Activated CD8-positive, alpha-beta T cell treated with anti-CD3 and anti-CD28 coated beads, Interleukin-2, amount 10 ng/mL, durations not matched to agents 7 days and 5 days (primary cell): ENCODE measurements at regions of chr2 and their contacts with region 1.

Region 1: GRCh38 chr2:174748948-174749347 is 15.3 kb downstream of the CHRNA1 start:
- DNase-seq: peak; percentile 82
- ATAC-seq: peak; percentile 62
- H3K4me3 Mint-ChIP-seq: no peak overlapping the region
- H3K27ac Mint-ChIP-seq: no peak overlapping the region
- H3K4me1 Mint-ChIP-seq: peaks cover 37% of the 10 kb centered on the region
- H3K27me3 Mint-ChIP-seq: peaks cover 13% of the 10 kb centered on the region

Region 2: GRCh38 chr2:174412256-174412655 is 336.7 kb before region 1 on chr2:
- CTCF ChIA-PET with region 1: no interaction called
- POLR2A ChIA-PET with region 1: no interaction called
- DNase-seq: no peak
- ATAC-seq: no peak
- H3K4me3 Mint-ChIP-seq: no peak overlapping the region
- H3K27ac Mint-ChIP-seq: no peak overlapping the region
- H3K4me1 Mint-ChIP-seq: peaks cover 3% of the 10 kb centered on the region
- H3K27me3 Mint-ChIP-seq: no peaks in the 10 kb centered on the region

Region 3: GRCh38 chr2:174688079-174688478 is 60.9 kb before region 1 on chr2:
- CTCF ChIA-PET with region 1: interaction called, 13 read pairs
- POLR2A ChIA-PET with region 1: no interaction called
- DNase-seq: no peak
- ATAC-seq: peak; percentile 68
- H3K4me3 Mint-ChIP-seq: no peak overlapping the region
- H3K27ac Mint-ChIP-seq: no peak overlapping the region
- H3K4me1 Mint-ChIP-seq: peaks cover 44% of the 10 kb centered on the region
- H3K27me3 Mint-ChIP-seq: no peaks in the 10 kb centered on the region

Region 4: GRCh38 chr2:174729797-174730697 is 18.9 kb before region 1 on chr2:
- CTCF ChIA-PET with region 1: interaction called, 20 read pairs
- POLR2A ChIA-PET with region 1: no interaction called
- DNase-seq: peak; percentile 47
- ATAC-seq: peak; percentile 81
- H3K4me3 Mint-ChIP-seq: peak overlapping the region; percentile 80
- H3K27ac Mint-ChIP-seq: peak overlapping the region; percentile 11
- H3K4me1 Mint-ChIP-seq: peaks cover 33% of the 10 kb centered on the region
- H3K27me3 Mint-ChIP-seq: peaks cover 32% of the 10 kb centered on the region

Region 5: DNA sequence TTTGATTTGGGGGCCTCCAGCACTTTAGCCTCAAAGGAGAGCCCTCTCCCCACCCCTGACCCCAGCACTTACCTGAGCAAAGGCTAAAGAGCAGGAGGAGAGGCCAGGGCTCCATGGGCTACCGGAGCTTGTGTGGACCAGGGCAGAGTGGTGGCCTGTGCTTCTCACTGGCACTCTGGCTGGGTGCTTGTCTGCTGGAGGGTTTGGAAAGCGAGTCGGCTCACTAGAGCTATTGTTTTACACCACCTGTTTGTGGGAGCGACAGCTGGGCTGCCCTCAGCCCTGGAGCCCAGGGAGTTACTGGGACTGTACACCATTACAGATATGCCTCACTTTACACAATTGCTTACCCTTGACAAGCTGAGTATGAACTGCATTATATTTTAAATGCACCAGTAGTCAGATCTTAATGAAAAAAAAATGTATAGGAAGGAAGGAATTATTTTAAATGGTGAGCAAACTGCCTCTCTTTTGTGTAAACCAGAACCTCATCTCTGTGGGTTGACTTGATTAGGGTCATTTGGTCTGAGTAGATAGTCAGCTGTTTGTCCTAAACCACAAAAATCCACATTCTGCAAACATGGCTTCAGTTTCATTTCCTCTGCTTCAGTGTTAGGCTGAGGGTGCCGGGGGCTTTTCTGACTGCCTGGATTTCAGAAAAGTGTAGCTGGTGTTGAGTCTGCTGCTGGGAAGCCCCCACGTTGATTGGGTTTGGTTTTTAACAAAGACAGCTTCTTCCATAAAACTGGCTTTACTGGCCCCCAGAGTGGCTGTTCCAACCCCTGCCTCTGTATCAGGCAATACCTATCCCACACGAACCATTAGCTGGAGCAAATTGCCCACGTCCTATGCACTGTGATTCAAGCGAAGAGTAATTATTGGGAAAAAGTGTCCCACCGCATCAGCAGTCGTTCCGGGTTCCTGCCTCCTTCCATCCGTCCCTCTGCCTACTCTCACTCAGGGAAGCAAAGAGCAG is 15.6 kb after region 1 on chr2 and contains the start of gene CHRNA1:
- CTCF ChIA-PET with region 1: interaction called, 15 read pairs
- POLR2A ChIA-PET with region 1: interaction called, 8 read pairs
- DNase-seq: no peak
- ATAC-seq: no peak
- H3K4me3 Mint-ChIP-seq: no peak within 1 kb of the TSS
- H3K27ac Mint-ChIP-seq: no peak within 1 kb of the TSS
- H3K4me1 Mint-ChIP-seq: peaks cover 9% of the 10 kb centered on the region
- H3K27me3 Mint-ChIP-seq: peaks cover 4% of the 10 kb centered on the region
- total RNA-seq, gene CHRNA1: not detected

Region 6: DNA sequence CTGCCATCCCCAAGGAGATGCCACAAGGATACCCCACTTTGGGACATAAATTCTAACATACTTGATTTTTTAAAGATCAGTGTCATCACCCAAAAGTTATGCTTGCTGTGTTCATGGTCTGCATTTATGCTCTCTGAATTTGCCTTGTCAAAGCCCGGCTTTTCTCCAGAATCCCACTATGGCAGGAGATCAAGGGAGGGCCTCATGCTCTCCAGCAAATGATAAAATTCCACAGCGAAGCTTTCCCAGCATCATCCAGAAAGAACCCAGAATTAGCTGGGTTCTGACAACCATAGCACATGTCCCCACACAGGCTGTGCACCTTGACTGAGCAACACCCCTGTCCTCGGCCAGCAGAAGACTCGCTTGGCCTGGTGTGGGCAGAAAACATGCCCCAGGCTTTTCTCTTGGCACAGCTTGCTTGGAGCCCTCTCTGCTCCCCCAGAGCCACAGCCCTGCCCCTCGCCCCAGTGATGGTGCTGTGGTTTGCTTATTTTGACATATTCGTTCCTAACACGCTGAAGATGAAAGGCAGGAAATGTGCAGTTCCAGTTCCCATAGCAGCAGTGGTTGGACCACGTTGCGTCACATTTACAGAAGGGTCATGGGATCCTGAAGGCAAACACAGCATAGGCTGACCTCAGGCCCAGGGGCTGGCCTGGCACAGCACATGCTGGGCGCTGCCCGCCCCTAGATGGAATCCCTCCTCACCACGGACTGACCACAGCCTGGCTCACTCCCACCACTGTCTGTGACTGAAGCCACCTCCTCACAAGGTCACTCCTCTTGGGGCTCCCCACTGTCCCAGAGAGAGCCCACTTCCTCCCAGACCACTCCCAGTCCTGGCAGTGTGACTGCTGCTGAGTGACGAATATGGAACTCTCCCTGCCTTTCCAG is 29.4 kb after region 1 on chr2:
- CTCF ChIA-PET with region 1: interaction called, 40 read pairs
- POLR2A ChIA-PET with region 1: interaction called, 4 read pairs
- DNase-seq: peak; percentile 91
- ATAC-seq: peak; percentile 91
- H3K4me3 Mint-ChIP-seq: peak overlapping the region; percentile 37
- H3K27ac Mint-ChIP-seq: peak overlapping the region; percentile 82
- H3K4me1 Mint-ChIP-seq: peaks cover 52% of the 10 kb centered on the region
- H3K27me3 Mint-ChIP-seq: no peaks in the 10 kb centered on the region

Region 7: DNA sequence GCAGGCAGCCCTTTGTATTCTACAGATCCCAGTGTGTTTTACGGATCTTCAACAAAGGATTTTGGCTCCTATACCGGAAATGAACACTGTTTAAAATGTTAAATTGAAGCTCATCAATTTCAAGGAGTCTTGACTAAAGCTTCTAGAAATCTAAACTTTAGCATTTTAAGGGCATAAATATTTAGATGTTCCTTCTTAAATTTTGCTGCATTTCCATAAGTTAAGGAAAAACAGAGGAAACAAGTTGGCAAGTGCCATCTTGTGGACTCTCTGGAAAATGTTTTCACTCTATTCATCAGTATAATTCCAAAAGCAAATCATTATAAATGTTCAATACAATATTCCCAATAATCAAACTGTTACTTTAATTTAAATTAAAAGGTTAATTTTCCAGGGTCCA is 236.7 kb after region 1 on chr2:
- CTCF ChIA-PET with region 1: interaction called, 37 read pairs
- POLR2A ChIA-PET with region 1: no interaction called
- DNase-seq: no peak
- ATAC-seq: no peak
- H3K4me3 Mint-ChIP-seq: no peak overlapping the region
- H3K27ac Mint-ChIP-seq: no peak overlapping the region
- H3K4me1 Mint-ChIP-seq: peaks cover 2% of the 10 kb centered on the region
- H3K27me3 Mint-ChIP-seq: peaks cover 11% of the 10 kb centered on the region

Region 8: DNA sequence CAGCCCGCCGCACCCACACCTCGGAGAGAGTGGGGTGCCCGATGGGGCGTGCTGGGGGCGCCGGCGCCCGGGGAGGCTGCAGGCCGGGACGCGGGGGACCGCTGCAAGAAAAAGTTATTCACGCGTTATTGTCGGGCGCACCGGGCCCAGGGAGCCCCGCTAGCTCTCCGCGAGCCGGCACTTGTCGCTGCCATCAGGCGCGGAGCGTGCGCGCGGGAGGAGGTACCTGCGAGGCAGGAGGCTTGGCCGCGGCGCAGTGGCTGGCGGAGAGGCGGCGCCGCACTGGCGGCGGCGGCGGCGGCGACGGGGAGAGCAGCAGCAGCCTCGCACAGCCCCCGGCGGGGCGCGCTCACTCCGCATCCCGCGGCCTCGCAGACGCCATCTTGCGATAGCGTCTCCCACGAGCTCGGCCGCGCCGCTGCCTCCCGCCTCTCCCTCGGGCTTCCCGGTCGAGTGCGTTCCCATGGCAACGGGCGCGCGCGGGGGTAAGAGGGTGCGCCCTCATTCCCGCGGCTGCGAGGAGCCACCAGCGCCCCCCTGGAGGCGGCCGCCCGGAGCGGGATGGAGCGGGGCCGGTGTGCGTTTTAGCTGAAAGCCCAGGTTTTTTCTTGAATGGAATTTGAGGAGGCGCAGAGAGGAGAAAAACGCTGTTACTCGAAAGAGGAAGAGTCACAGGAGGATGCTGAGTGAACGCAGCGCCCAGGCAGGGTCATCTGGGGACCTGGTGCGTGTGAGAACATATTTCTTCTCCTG is 256.2 kb after region 1 on chr2 and contains the start of gene CHN1:
- CTCF ChIA-PET with region 1: interaction called, 11 read pairs
- POLR2A ChIA-PET with region 1: no interaction called
- DNase-seq: peak; percentile 70
- ATAC-seq: peak; percentile 92
- H3K4me3 Mint-ChIP-seq: peak within 1 kb of the TSS; percentile 74
- H3K27ac Mint-ChIP-seq: no peak within 1 kb of the TSS
- H3K4me1 Mint-ChIP-seq: peaks cover 9% of the 10 kb centered on the region
- H3K27me3 Mint-ChIP-seq: peaks cover 59% of the 10 kb centered on the region
- total RNA-seq, gene CHN1: 0.11 to 0.50 TPM